WTC11 (cell line): ENCODE measurements at regions of chr22 and their contacts with region 1.

Region 1: DNA sequence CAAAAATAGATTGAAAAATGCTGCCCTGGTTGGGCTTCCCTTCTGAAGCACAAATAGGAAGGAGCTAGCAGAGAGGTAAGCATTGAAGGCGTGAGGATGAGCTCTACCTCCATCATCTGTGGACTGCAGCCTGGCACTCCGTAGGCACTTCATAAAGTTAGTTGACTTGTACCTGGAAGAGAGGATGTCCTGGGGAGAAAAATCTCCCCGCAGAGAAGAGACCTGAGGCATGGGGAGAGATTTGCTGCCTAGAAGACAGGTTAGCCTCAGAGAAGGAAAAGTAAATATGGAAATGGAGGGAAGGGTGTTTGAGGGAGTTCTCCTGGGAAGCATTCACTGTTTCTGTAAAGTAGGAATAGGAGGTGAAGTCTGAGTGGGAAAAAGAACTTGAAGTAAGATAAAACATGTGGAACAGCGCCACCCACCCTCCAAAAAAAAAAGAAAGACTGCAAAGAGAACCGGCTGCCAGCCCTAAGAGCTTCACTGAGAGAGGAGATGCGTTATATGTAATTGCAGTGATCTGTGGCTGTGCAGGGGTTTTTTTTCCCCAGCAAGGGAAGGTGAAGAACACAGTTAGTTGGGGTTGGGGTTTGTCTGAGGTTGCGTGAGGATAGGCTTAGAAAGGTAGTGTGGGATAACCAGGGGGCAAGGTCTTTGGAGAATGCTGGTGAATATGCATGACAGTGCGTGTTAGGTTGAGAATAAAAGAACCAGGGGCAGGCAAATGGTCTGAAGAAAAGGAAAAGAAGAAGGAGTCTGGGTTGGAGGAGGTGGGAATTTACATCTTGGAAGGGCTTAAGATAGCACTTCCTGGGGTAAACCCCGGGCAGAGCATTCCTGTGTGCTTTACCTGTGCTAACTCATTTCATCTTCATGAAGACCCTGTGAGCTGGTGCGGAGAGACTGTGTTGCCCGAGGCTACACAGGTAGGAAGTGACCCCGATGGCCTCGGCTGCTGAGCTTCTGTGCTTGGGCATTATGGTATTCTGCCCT is 16.0 kb downstream of the TNRC6B start:
- DNase-seq: peak; percentile 36
- ATAC-seq: peak; percentile 82
- H3K4me3 Mint-ChIP-seq: peak overlapping the region; percentile 57
- H3K27ac Mint-ChIP-seq: peak overlapping the region; percentile 93
- H3K4me1 Mint-ChIP-seq: peaks cover 90% of the 10 kb centered on the region
- H3K27me3 Mint-ChIP-seq: no peaks in the 10 kb centered on the region
- CTCF ChIP-seq: no peak

Region 2: GRCh38 chr22:40121461-40121860 is 72.3 kb before region 1 on chr22:
- CTCF ChIA-PET with region 1: no interaction called
- POLR2A ChIA-PET with region 1: no interaction called
- DNase-seq: no peak
- ATAC-seq: no peak
- H3K4me3 Mint-ChIP-seq: no peak overlapping the region
- H3K27ac Mint-ChIP-seq: peak overlapping the region; percentile 28
- H3K4me1 Mint-ChIP-seq: peaks cover 12% of the 10 kb centered on the region
- H3K27me3 Mint-ChIP-seq: no peaks in the 10 kb centered on the region
- CTCF ChIP-seq: no peak

Region 3: GRCh38 chr22:40177738-40178416 is 15.8 kb before region 1 on chr22 and contains the start of gene TNRC6B:
- CTCF ChIA-PET with region 1: interaction called, 40 read pairs
- POLR2A ChIA-PET with region 1: interaction called, 22 read pairs
- DNase-seq: peak; percentile 54
- ATAC-seq: peak; percentile 73
- H3K4me3 Mint-ChIP-seq: peak within 1 kb of the TSS; percentile 93
- H3K27ac Mint-ChIP-seq: peak within 1 kb of the TSS; percentile 96
- H3K4me1 Mint-ChIP-seq: peaks cover 51% of the 10 kb centered on the region
- H3K27me3 Mint-ChIP-seq: no peaks in the 10 kb centered on the region
- CTCF ChIP-seq: no peak
- total RNA-seq, gene TNRC6B: 49.7 to 51.1 TPM (median 50.4 TPM) in 3 replicates

Region 4: GRCh38 chr22:40206561-40206960 is 12.8 kb after region 1 on chr22:
- CTCF ChIA-PET with region 1: interaction called, 15 read pairs
- POLR2A ChIA-PET with region 1: no interaction called
- DNase-seq: no peak
- ATAC-seq: no peak
- H3K4me3 Mint-ChIP-seq: no peak overlapping the region
- H3K27ac Mint-ChIP-seq: peak overlapping the region; percentile 74; the same call in 1 of the 2 replicates
- H3K4me1 Mint-ChIP-seq: peaks cover 84% of the 10 kb centered on the region
- H3K27me3 Mint-ChIP-seq: no peaks in the 10 kb centered on the region
- CTCF ChIP-seq: no peak

Region 5: DNA sequence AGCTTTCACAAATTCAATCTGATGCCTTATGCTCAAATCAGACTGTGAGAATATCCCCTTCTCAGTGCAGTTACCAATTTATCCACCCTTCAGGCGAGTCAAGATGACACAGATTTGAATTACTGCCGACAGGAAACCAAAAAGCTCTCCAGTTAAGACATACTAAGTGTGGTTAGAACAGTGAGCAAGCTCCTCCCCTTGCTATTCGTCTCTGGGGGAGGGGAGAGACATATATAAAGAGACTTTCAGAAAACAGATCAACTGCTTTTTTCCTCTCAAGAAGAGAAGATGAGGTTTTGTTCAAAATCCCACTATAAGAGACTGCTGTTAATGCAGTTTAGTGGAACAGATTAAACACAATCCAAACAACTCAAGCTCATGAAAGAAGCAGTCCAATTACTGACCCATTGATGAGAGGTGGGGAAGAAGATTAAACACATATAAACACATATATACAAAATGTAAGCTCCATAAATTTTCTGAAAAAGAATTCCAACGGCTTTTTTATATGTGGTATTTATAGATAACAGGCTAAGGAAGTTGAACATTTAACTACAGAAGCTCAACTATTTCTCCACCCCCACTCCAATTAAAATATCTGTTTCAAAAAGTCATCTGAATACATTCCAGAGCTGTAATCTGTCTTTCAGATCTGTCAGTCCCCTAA is 340.1 kb after region 1 on chr22:
- CTCF ChIA-PET with region 1: no interaction called
- POLR2A ChIA-PET with region 1: no interaction called
- DNase-seq: no peak
- ATAC-seq: peak; percentile 75
- H3K4me3 Mint-ChIP-seq: peak overlapping the region; percentile 25
- H3K27ac Mint-ChIP-seq: peak overlapping the region; percentile 93
- H3K4me1 Mint-ChIP-seq: peaks cover 37% of the 10 kb centered on the region
- H3K27me3 Mint-ChIP-seq: no peaks in the 10 kb centered on the region
- CTCF ChIP-seq: no peak